ENCODE measurements at regions of chr10 and their contacts with region 1.

Region 1: DNA sequence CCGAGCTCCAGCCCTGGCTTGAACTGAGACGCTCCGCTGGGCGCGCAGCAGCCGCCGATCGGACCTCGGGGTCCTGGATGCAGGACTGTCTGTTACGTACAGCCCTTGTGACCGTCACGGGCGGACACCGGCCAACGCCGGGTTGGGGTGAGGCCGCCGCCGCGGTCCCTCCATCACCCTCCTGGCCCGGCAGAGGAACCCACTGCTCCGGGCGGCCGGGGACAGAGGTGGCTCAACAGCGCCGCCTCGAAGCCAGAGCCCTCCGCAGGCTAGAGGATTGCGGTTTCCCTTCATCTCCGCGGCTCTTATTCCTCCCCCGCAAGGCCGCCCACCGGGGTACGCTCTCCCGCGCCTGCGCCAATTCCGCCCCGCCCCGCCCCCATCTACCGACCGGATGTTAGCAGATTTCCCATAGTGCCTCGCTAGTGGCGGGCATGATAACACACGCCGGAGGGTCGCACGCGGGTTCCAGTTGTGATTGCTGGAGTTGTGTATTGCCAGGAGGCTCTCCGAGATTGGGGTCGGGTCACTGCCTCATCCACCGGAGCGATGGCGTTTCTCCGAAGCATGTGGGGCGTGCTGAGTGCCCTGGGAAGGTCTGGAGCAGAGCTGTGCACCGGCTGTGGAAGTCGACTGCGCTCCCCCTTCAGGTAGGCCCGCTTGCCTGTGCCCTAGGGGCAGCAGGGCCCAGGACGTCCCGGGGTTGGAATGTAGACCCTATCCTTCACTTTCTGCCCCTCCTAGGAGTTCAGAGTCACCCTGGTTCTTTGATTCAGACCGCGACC is at the start of gene TFAM:
- DNase-seq: peak; percentile 90 to 96 (median 92)
- H3K4me3 ChIP-seq: peak within 1 kb of the TSS; percentile 56 to 99 (median 88)
- H3K27ac ChIP-seq: peak within 1 kb of the TSS; percentile 63 to 99 (median 95)
- H3K27me3 ChIP-seq: no peaks in the 10 kb centered on the region
- CTCF ChIP-seq: peak; percentile 21 to 93 (median 74)
- total RNA-seq, gene TFAM: 17.3 to 34.6 (median 24.2) TPM

Region 2: DNA sequence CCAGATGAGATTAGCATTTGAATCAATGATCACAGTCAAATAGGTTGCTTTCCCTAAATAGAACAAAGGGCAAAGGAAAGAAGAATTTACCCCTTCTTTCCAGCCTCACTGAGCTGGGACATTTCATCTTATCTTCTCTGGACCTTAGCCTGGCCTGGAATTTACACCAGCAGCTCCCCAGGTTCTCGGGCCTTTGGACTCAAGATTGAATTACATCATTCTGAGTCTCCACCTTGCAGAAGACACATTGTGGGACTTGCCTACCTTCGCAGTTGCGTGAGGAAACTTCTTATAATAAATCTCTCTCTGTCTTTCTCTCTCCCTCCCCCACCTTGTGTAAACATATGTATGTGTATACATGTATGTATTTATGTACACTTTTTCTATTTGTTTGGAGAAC is 849.9 kb before region 1 on chr10:
- intact Hi-C with region 1: no loop called
- DNase-seq: no peak
- H3K4me3 ChIP-seq: no peak overlapping the region
- H3K27ac ChIP-seq: no peak overlapping the region
- H3K27me3 ChIP-seq: no peaks in the 10 kb centered on the region
- CTCF ChIP-seq: no peak

Region 3: GRCh38 chr10:58177362-58177947 is 207.7 kb before region 1 on chr10:
- intact Hi-C with region 1: loop called (anchors 2 to 10 kb)
- DNase-seq: no peak
- H3K4me3 ChIP-seq: no peak overlapping the region
- H3K27ac ChIP-seq: no peak overlapping the region
- H3K27me3 ChIP-seq: peaks cover 0 to 4% (median 0%) of the 10 kb centered on the region in 45 donors
- CTCF ChIP-seq: peak; percentile 53 to 94 (median 78)

Region 4: GRCh38 chr10:58268870-58269605 is 116.2 kb before region 1 on chr10 and contains the start of gene CISD1:
- intact Hi-C with region 1: loop called (anchors 1 kb)
- DNase-seq: peak; percentile 83 to 95 (median 93)
- H3K4me3 ChIP-seq: peak within 1 kb of the TSS; percentile 70 to 98 (median 91)
- H3K27ac ChIP-seq: peak within 1 kb of the TSS; percentile 76 to 98 (median 94)
- H3K27me3 ChIP-seq: no peaks in the 10 kb centered on the region
- CTCF ChIP-seq: peak in 21 of 56 donors; percentile 4 to 46 (median 14)
- total RNA-seq, gene CISD1: 25.5 to 115 (median 77.2) TPM

Region 5: DNA sequence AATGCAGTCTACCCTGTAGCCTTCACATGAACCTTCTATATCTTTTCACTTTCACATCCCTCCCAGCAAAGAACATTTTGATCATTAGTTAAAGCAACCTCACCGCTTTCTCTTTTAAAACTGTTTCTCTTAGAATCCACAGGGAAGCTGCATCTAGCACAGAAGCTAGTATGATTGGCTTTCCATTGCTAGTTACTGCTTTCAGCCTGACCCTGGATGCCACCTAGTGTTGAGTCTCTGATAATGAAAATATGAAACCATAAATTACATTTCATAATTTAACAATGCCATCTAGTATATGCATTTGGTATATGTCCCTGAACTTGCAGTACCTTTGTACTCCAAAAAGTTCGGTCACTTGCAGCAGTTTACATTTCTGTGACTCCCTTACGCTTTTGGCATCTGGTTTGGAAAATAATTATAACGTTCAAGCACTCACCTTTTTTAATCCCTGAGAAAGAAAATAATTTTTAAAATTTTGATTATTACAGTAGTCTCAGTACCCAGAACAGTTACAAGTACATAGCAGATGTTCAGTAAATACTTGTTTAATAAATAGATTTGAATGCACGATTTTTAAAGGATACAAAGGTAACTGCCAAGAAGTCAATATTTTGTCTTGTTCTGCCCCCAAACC is 93.5 kb before region 1 on chr10:
- intact Hi-C with region 1: loop called in 1 of 2 experiments (anchors 5 kb)
- DNase-seq: peak in 2 of 10 donors; percentile 6 to 18
- H3K4me3 ChIP-seq: no peak overlapping the region
- H3K27ac ChIP-seq: no peak overlapping the region
- H3K27me3 ChIP-seq: no peaks in the 10 kb centered on the region
- CTCF ChIP-seq: peak; percentile 47 to 92 (median 76)

Region 6: DNA sequence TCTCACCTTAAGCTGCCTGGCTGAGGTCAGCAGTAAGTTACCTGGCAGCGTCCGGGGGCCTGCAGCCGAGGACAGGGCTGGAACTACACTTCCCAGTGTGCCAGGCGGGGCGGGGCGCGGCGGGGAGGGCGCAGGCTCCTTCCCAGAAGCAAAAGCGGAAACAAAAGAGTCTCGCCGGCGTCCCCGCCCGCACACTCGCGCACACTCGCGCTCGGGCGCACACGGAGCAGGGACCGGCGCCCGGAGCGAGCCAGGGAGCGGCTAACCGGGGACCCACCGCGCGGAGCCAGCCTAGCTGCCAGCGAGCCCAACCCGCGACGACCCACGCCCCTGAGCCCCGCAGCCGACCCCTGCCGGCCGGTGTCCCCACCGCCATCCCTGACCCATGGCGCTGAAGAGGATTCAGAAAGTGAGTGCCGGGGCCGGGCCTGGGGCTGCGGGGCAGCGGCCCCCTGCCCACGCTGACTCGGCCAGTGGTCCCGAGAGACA is 50.3 kb before region 1 on chr10 and contains the start of gene UBE2D1:
- intact Hi-C with region 1: loop called (anchors 1 kb)
- DNase-seq: peak; percentile 85 to 95 (median 92)
- H3K4me3 ChIP-seq: peak within 1 kb of the TSS; percentile 62 to 99 (median 91)
- H3K27ac ChIP-seq: peak within 1 kb of the TSS in 56 of 59 donors; percentile 18 to 91 (median 75)
- H3K27me3 ChIP-seq: peaks cover 0 to 3% (median 0%) of the 10 kb centered on the region in 45 donors
- CTCF ChIP-seq: peak in 39 of 56 donors; percentile 1 to 57 (median 31)
- total RNA-seq, gene UBE2D1: 8.7 to 27.7 (median 17.2) TPM

Region 7: GRCh38 chr10:58360391-58361004 is 24.7 kb before region 1 on chr10:
- intact Hi-C with region 1: no loop called
- DNase-seq: no peak
- H3K4me3 ChIP-seq: no peak overlapping the region
- H3K27ac ChIP-seq: no peak overlapping the region
- H3K27me3 ChIP-seq: no peaks in the 10 kb centered on the region
- CTCF ChIP-seq: no peak